ENCODE measurements at regions of chr15 and their contacts with region 1.

Region 1: DNA sequence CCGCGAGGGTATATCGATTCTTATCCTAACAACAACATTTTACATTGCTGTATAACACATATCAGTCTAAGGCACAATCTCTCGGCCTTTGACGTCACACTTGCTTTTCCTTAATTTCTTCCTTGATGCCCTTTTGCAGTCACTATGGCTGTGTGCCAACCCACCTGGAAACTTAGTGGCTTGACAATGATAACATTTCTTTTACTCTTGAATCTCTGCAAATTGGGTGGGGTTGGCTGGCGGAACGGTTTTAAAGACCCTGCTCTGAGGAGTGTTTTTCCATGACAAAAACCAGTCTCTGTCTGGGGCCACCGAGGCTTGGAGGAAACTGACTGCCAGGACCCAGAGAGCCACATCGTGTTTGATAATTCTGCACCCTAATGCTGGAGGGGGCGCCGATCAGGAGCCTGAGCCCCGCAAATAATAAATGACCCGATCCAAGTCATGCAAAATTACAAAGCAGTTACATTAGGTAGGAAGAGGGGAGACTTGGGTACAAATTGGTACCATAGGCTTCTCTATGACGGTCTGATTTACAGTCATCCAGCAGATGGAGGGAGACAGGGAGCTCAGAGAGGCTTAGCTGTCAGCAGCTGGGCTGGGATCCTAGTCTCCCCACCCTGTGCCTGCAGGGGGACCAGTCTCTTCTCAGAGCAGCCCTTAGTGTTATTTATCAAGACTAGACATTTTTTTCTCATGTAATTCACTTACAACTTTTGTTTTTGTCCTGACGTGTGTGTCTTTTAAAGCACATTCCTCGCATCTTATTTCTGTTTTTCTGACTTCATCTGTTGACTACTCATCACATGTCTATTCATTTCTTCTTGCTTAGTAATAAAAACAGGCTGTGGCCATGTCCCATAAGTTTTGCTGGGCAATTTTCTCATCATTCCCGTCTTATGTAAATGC is 115.8 kb downstream of the KLF13 start:
- DNase-seq: peak; percentile 95
- ATAC-seq: peak; percentile 75
- H3K4me3 ChIP-seq: no peak overlapping the region
- H3K27ac ChIP-seq: peak overlapping the region; percentile 13; the same call in 1 of the 2 replicates
- H3K4me1 ChIP-seq: peaks cover 22% of the 10 kb centered on the region
- H3K27me3 ChIP-seq: no peaks in the 10 kb centered on the region
- CTCF ChIP-seq: peak; percentile 49; the same call in 1 of the 2 replicates
- POLR2A ChIP-seq: 0 out of 2 replicates have a peak, but pooled peaks have one; percentile 14
- RAD21 ChIP-seq: peak; percentile 34; the same call in 1 of the 2 replicates

Region 2: GRCh38 chr15:31215490-31216214 is 226.8 kb before region 1 on chr15:
- CTCF ChIA-PET with region 1: no interaction called
- POLR2A ChIA-PET with region 1: no interaction called
- dilution Hi-C with region 1: no loop called
- in situ Hi-C with region 1: no loop called
- intact Hi-C with region 1: loop called (anchors 5 kb)
- DNase-seq: no peak
- ATAC-seq: peak; percentile 94
- H3K4me3 ChIP-seq: peak overlapping the region; percentile 36
- H3K27ac ChIP-seq: no peak overlapping the region
- H3K4me1 ChIP-seq: peaks cover 1% of the 10 kb centered on the region; the same call in 1 of the 2 replicates
- H3K27me3 ChIP-seq: peaks cover 20% of the 10 kb centered on the region
- CTCF ChIP-seq: peak; percentile 66
- POLR2A ChIP-seq: no peak
- RAD21 ChIP-seq: peak; percentile 62

Region 3: DNA sequence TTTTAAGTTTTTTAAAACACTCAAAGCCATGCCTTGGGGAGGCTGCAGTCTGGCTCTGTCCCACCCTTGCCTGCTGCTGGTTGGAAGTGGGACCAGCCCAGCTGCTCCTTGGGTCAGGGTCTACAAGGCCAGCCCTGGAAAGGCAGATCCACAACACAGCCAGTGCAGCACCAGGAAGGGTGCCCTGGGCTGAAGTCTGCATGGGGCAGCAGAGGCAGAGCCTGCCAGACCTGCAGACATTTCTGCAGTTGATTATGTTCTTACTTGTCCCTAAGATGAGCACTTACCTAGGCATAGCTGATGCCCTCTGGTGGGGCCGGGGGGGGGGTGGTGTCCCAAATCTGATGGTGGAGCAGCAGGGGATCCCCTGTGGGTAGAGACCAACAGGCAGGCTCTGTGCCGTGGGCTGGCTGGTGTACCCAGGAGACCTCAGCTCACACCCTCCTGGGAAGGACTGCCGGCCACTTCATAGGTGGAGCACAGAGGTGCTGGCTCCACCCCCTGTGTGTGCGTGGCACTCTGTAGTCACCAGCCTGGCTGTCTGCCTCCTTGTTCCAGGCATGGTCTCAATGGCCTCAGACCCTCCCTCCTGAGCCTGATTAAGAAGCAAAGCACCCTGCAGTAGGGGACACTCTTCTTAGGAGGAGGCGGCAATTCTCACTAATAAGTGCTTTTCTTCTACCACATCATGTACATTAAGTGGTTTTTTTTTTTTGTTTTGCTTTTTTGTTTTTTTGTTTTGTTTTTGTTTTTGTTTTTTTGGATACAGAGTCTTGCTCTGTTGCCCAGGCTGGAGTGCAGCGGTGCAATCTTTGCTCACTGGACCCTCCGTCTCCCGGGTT is 213.3 kb before region 1 on chr15:
- CTCF ChIA-PET with region 1: no interaction called
- POLR2A ChIA-PET with region 1: interaction called, 12 read pairs
- dilution Hi-C with region 1: no loop called
- in situ Hi-C with region 1: no loop called
- intact Hi-C with region 1: no loop called
- DNase-seq: no peak
- ATAC-seq: no peak
- H3K4me3 ChIP-seq: no peak overlapping the region
- H3K27ac ChIP-seq: no peak overlapping the region
- H3K4me1 ChIP-seq: no peaks in the 10 kb centered on the region
- H3K27me3 ChIP-seq: peaks cover 6% of the 10 kb centered on the region
- CTCF ChIP-seq: no peak
- POLR2A ChIP-seq: no peak
- RAD21 ChIP-seq: no peak

Region 4: GRCh38 chr15:31391687-31392671 is 50.5 kb before region 1 on chr15:
- CTCF ChIA-PET with region 1: interaction called, 7 read pairs
- POLR2A ChIA-PET with region 1: interaction called, 26 read pairs
- dilution Hi-C with region 1: no loop called
- in situ Hi-C with region 1: no loop called
- intact Hi-C with region 1: no loop called
- DNase-seq: peak; percentile 62
- ATAC-seq: peak; percentile 91
- H3K4me3 ChIP-seq: peak overlapping the region; percentile 97
- H3K27ac ChIP-seq: peak overlapping the region; percentile 70
- H3K4me1 ChIP-seq: peaks cover 6% of the 10 kb centered on the region
- H3K27me3 ChIP-seq: no peaks in the 10 kb centered on the region
- CTCF ChIP-seq: 0 out of 2 replicates have a peak, but pooled peaks have one; percentile 4
- POLR2A ChIP-seq: peak; percentile 72
- RAD21 ChIP-seq: no peak; the same call in 1 of the 2 replicates

Measured in IMR-90 (cell line).